PC-3 (cell line): ENCODE measurements at regions of chr1 and their contacts with region 1.

Region 1: DNA sequence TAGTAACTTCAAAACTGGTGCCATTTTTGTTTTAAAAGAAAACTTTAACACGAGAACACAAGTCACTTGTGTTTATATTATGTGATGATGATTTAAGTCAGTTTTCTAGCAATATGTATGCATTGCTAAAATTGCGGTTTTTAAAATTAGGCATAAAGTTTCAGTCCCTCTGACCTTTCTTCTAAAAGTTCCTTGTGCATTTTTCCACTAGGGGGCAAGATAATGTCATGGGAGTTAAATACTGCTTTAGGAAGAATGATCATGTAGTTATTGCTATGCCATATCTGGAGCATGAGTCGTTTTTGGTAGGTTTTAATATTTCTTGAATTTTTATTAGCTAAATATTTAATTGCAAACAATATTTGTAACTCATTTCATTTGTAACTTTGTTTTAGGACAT is 10.7 kb downstream of the CDC7 start:
- DNase-seq: peak; percentile 61
- ATAC-seq: 0 out of 2 replicates have a peak, but pooled peaks have one; percentile 46
- H3K4me3 ChIP-seq: no peak overlapping the region
- H3K27ac ChIP-seq: no peak overlapping the region
- H3K4me1 ChIP-seq: no peaks in the 10 kb centered on the region
- H3K27me3 ChIP-seq: no peaks in the 10 kb centered on the region
- CTCF ChIP-seq: peak; percentile 79

Region 2: DNA sequence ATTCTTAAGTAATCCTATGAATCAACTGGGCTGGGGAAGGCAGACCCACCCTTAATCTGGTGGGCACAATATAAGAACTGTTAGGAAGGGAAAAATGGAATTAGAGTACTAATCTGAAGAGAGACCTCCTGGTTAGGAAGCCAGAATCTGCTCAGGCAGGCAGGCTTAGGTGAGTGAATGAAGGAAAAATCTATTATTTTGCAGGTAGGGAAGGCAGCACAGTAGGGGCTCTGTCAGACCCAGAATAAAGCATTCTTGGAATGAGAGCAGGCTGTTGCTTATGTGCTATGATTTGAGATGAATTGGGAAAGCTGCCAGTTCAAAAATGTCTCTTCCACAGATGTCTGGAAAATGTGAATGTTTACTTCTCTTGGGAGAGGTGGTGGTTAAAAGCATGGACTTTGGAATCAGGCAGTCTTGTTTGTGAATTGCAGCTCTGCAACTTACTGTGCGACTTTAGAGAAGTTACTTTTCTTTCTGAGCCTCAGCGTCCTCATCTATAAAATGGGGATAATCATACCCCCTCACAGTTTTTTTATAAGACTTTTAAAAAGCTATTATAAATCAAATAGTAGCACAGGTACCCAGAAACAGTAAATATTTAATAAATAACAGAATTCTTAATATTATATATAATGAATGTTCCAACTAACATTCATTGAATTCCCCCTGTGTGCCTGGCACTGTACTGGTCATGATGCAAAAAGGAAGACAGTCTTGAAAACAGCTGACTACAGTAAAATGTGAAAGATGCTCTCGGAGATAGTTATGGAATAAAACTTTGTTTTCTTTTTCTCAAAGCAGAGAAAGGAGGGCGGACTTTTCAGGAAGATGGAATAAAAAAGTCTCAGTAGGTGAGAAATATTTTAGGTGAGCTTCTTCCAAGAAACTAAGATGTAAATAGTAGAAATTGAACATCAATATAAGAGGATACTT is 474.2 kb before region 1 on chr1:
- CTCF ChIA-PET with region 1: no interaction called
- POLR2A ChIA-PET with region 1: no interaction called
- intact Hi-C with region 1: no loop called
- DNase-seq: no peak
- ATAC-seq: no peak
- H3K4me3 ChIP-seq: no peak overlapping the region
- H3K27ac ChIP-seq: no peak overlapping the region
- H3K4me1 ChIP-seq: no peaks in the 10 kb centered on the region
- H3K27me3 ChIP-seq: peaks cover 33% of the 10 kb centered on the region; the same call in 1 of the 2 replicates
- CTCF ChIP-seq: no peak

Region 3: GRCh38 chr1:91440845-91441244 is 70.5 kb before region 1 on chr1:
- CTCF ChIA-PET with region 1: no interaction called
- POLR2A ChIA-PET with region 1: no interaction called
- intact Hi-C with region 1: loop called (anchors 1 kb)
- DNase-seq: peak; percentile 56
- ATAC-seq: peak; percentile 70
- H3K4me3 ChIP-seq: no peak overlapping the region
- H3K27ac ChIP-seq: no peak overlapping the region
- H3K4me1 ChIP-seq: no peaks in the 10 kb centered on the region
- H3K27me3 ChIP-seq: peaks cover 24% of the 10 kb centered on the region
- CTCF ChIP-seq: peak; percentile 60

Region 4: DNA sequence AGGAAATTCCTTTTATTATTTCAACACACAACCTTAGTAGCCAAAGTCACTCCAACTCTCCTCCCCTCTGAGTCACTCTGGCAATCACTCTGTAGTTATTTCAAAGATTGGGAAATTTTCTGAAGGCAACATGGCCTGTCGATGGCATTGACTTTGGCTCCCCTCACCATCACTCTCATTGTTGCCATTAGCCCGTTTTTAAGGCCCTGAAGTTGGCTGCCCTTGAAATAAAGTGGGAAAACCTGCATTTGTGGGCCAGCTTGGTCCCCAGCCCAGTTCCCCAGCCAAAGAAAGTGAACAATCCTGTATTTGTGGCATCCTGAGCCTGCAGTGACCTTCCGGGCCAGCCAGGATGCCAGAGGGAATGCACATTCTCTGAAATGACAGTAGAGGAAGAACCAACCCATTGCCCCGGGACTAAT is 41.8 kb after region 1 on chr1:
- CTCF ChIA-PET with region 1: no interaction called
- POLR2A ChIA-PET with region 1: no interaction called
- intact Hi-C with region 1: no loop called
- DNase-seq: peak; percentile 42
- ATAC-seq: no peak
- H3K4me3 ChIP-seq: no peak overlapping the region
- H3K27ac ChIP-seq: no peak overlapping the region
- H3K4me1 ChIP-seq: peaks cover 20% of the 10 kb centered on the region
- H3K27me3 ChIP-seq: no peaks in the 10 kb centered on the region
- CTCF ChIP-seq: no peak

Region 5: DNA sequence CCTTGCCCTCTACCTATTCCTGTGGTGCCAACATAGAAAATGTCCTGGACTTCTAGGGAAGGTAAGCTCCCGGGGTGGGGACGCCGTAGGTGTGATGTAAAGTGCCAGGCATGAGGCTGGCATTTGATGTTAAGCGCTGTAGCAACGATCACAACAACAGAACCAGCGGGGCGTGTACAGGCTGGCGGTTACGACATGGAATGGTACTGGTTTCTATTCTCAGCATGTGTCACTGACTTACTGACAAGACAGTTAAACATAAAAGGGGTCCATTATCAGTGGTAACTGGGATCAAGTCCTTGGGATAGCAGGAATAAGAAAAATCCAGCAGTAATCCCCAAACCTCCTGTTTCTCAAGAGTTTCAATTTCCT is 315.7 kb after region 1 on chr1:
- CTCF ChIA-PET with region 1: interaction called, 10 read pairs
- POLR2A ChIA-PET with region 1: no interaction called
- intact Hi-C with region 1: no loop called
- DNase-seq: no peak
- ATAC-seq: no peak
- H3K4me3 ChIP-seq: no peak overlapping the region
- H3K27ac ChIP-seq: no peak overlapping the region
- H3K4me1 ChIP-seq: no peaks in the 10 kb centered on the region
- H3K27me3 ChIP-seq: no peaks in the 10 kb centered on the region
- CTCF ChIP-seq: no peak

Region 6: DNA sequence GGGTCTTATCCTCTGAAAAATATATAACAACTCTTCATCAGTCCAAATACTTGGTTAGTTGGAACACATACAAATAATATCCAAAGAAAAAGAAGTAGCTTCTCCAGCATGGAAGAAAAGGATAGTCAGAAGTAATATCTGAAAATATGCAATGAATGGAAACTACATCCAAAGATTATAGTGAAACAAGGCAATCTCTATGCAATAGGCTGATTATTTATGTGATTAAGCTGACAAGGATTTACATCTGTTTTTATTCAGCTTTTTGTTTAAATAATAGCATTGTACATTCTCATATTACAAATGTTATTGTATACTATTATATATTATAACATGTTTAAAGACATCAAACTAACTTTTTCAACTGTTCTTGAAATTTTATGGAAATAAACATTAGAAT is 389.8 kb after region 1 on chr1:
- CTCF ChIA-PET with region 1: interaction called, 11 read pairs
- POLR2A ChIA-PET with region 1: no interaction called
- intact Hi-C with region 1: no loop called
- DNase-seq: no peak
- ATAC-seq: no peak
- H3K4me3 ChIP-seq: no peak overlapping the region
- H3K27ac ChIP-seq: no peak overlapping the region
- H3K4me1 ChIP-seq: peaks cover 14% of the 10 kb centered on the region
- H3K27me3 ChIP-seq: no peaks in the 10 kb centered on the region
- CTCF ChIP-seq: no peak

Region 7: DNA sequence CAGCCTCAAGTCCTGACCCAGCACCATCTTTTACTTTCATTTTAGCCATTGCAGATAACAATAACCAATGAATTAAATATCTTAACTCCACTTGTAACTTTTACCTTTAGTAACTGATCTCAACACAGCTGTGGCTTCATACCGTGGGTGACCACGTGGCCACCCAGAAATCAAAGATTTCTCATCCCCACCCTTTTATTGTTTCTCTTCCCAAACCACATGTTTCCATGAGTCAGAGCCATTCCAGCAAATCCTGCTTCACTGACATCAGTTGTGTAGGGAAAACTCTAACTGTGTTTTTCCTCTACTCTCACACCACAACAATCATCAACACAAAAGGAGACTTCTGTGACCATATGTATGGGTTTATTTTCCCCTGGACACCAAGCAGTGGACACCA is 412.8 kb after region 1 on chr1:
- CTCF ChIA-PET with region 1: interaction called, 3 read pairs
- POLR2A ChIA-PET with region 1: no interaction called
- intact Hi-C with region 1: loop called (anchors 1 kb)
- DNase-seq: peak; percentile 55
- ATAC-seq: 0 out of 2 replicates have a peak, but pooled peaks have one; percentile 20
- H3K4me3 ChIP-seq: no peak overlapping the region
- H3K27ac ChIP-seq: no peak overlapping the region
- H3K4me1 ChIP-seq: no peaks in the 10 kb centered on the region; the same call in 1 of the 2 replicates
- H3K27me3 ChIP-seq: no peaks in the 10 kb centered on the region
- CTCF ChIP-seq: no peak